Posterior cingulate gyrus (tissue), 11 donors: ENCODE measurements at regions of chr7 and their contacts with region 1.

Region 1: GRCh38 chr7:97027427-97028234 is 3.0 kb upstream of the DLX5 start:
- DNase-seq: peak; percentile 64 to 97 (median 82)

Region 2: GRCh38 chr7:95723592-95724180 is 1303.9 kb before region 1 on chr7:
- intact Hi-C with region 1: loop called (anchors 5 kb)
- DNase-seq: peak in 5 of 10 donors; percentile 13 to 75 (median 42)

Region 3: GRCh38 chr7:96075510-96076349 is 951.9 kb before region 1 on chr7:
- intact Hi-C with region 1: loop called (anchors 1 kb)
- DNase-seq: peak; percentile 46 to 95 (median 70)

Region 4: GRCh38 chr7:96414931-96415292 is 612.7 kb before region 1 on chr7:
- intact Hi-C with region 1: loop called (anchors 5 kb)
- DNase-seq: peak in 6 of 10 donors; percentile 13 to 84 (median 40)

Region 5: DNA sequence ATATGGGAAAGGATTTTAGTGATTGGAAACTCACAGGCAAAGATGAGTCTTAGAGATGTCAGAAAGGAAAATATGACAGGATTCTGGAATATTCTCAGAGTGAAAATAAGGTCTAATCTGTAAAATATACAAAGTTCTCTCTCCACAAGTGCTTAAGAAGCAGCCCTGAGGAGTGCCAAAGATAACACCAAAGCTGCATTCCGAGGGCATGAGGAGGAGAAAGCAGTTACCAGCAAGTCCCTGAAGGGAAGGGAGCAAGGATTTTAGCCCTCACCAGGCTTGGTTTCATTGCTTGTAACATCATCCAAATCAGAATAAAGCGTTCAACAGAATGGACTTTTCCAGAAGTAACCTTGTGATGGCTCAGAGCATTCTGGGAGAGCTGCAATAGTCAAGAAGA is 53.6 kb before region 1 on chr7:
- intact Hi-C with region 1: no loop called
- DNase-seq: no peak

Region 6: GRCh38 chr7:97246317-97246716 is 218.7 kb after region 1 on chr7:
- intact Hi-C with region 1: no loop called
- DNase-seq: no peak